ENCODE measurements at regions of chr6 and their contacts with region 1.

Region 1: GRCh38 chr6:33607784-33608161 is 13.3 kb upstream of the ITPR3 start:
- DNase-seq: peak; percentile 33
- ATAC-seq: no peak
- H3K4me3 ChIP-seq: no peak overlapping the region
- H3K27ac ChIP-seq: no peak overlapping the region
- H3K4me1 ChIP-seq: peaks cover 13% of the 10 kb centered on the region
- H3K27me3 ChIP-seq: no peaks in the 10 kb centered on the region
- CTCF ChIP-seq: peak; percentile 59

Region 2: DNA sequence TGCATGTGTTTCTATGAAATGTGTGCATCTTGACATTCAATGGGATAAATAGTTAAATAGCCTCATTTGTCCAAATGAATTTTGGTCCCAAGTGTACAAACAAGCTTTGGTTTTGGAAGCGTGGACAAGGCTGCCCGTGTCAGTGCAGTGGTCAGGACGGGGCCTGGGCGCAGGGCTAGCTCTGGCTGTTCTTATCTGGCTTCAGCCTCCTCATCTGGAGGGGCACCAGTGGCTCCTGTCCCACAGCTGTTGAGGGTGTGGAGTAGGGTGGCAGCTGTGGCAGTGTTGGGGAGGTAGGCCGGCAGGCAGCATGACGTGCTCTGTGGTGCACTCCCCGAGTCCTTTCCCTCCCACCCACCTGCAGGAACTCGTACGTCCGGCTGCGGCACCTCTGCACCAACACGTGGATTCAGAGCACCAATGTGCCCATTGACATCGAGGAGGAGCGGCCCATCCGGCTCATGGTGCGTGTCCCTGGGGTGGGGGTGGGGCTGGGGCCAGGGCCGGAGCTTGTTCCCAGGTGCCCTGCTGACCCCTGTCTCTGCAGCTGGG is 56.8 kb after region 1 on chr6:
- CTCF ChIA-PET with region 1: no interaction called
- POLR2A ChIA-PET with region 1: interaction called, 13 read pairs
- intact Hi-C with region 1: no loop called
- DNase-seq: no peak
- ATAC-seq: no peak
- H3K4me3 ChIP-seq: no peak overlapping the region
- H3K27ac ChIP-seq: no peak overlapping the region
- H3K4me1 ChIP-seq: peaks cover 10% of the 10 kb centered on the region
- H3K27me3 ChIP-seq: no peaks in the 10 kb centered on the region
- CTCF ChIP-seq: no peak

Measured in PC-3 (cell line).